ENCODE measurements at regions of chr9 and their contacts with region 1.

Region 1: GRCh38 chr9:137240861-137241489 is at the start of gene TUBB4B:
- DNase-seq: peak; percentile 87 to 99 (median 98)
- ATAC-seq: peak; percentile 87
- H3K4me3 ChIP-seq: peak within 1 kb of the TSS; percentile 72
- H3K4me3 Mint-ChIP-seq: peak within 1 kb of the TSS; percentile 83 to 97 (median 92)
- H3K27ac ChIP-seq: peak within 1 kb of the TSS; percentile 83
- H3K27ac Mint-ChIP-seq: peak within 1 kb of the TSS; percentile 82 to 94 (median 93)
- H3K4me1 ChIP-seq: peaks cover 15 to 23% of the 10 kb centered on the region in 2 donors
- H3K4me1 Mint-ChIP-seq: peaks cover 12 to 35% (median 21%) of the 10 kb centered on the region in 7 donors
- H3K27me3 ChIP-seq: no peaks in the 10 kb centered on the region
- H3K27me3 Mint-ChIP-seq: peaks cover 0 to 4% (median 0%) of the 10 kb centered on the region in 5 donors
- total RNA-seq, gene TUBB4B: 44.2 to 260 (median 87.5) TPM

Region 2: DNA sequence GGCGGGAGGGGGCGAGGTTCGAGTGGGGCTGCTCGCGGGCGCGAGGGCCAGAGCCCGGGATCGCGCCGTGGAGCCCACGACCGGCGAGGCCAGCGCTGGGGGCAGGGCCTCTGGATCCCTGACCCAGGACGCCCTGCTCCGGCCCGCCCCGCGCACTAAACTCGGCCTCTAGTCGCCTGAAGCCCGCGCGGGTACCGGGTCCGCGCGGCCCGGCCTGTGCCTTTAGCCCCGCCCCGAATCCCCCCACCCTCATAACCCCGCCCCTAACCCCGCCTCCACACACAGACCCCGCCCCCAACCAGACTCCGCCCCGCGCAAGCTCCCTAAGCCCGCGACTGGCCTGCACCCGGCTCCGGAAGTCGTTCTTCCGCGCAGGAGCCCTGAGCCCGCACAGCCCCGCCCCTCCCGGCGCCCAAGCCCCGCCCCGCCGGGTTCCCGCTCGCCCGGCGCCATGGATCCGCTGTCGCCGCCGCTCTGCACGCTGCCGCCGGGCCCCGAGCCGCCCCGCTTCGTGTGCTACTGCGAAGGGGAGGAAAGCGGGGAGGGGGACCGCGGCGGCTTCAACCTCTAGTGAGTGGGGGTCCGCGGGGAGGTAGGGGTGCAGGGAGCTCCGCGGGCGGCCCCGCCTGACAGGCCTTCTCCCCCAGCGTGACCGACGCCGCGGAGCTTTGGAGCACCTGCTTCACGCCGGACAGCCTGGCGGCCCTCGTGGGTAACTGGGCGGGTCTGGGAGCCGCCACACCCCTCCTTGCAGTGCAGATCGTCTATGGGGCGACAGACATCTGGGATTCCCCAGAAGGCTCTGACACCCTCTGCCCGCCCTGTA is 248.8 kb before region 1 on chr9 and contains the start of gene PAXX:
- CTCF ChIA-PET with region 1: no interaction called
- POLR2A ChIA-PET with region 1: interaction called, 5 read pairs
- intact Hi-C with region 1: loop called in 1 of 2 experiments (anchors 2 kb)
- DNase-seq: peak; percentile 90 to 99 (median 93)
- ATAC-seq: peak; percentile 96
- H3K4me3 ChIP-seq: peak within 1 kb of the TSS; percentile 74
- H3K4me3 Mint-ChIP-seq: peak within 1 kb of the TSS; percentile 76 to 90 (median 86)
- H3K27ac ChIP-seq: peak within 1 kb of the TSS; percentile 81
- H3K27ac Mint-ChIP-seq: peak within 1 kb of the TSS; percentile 48 to 89 (median 88)
- H3K4me1 ChIP-seq: peaks cover 17 to 23% of the 10 kb centered on the region in 2 donors
- H3K4me1 Mint-ChIP-seq: peaks cover 0 to 25% (median 15%) of the 10 kb centered on the region in 7 donors
- H3K27me3 ChIP-seq: no peaks in the 10 kb centered on the region
- H3K27me3 Mint-ChIP-seq: peaks cover 5 to 22% (median 5%) of the 10 kb centered on the region in 5 donors
- total RNA-seq, gene PAXX: 54.8 to 78.2 (median 68.0) TPM

Region 3: DNA sequence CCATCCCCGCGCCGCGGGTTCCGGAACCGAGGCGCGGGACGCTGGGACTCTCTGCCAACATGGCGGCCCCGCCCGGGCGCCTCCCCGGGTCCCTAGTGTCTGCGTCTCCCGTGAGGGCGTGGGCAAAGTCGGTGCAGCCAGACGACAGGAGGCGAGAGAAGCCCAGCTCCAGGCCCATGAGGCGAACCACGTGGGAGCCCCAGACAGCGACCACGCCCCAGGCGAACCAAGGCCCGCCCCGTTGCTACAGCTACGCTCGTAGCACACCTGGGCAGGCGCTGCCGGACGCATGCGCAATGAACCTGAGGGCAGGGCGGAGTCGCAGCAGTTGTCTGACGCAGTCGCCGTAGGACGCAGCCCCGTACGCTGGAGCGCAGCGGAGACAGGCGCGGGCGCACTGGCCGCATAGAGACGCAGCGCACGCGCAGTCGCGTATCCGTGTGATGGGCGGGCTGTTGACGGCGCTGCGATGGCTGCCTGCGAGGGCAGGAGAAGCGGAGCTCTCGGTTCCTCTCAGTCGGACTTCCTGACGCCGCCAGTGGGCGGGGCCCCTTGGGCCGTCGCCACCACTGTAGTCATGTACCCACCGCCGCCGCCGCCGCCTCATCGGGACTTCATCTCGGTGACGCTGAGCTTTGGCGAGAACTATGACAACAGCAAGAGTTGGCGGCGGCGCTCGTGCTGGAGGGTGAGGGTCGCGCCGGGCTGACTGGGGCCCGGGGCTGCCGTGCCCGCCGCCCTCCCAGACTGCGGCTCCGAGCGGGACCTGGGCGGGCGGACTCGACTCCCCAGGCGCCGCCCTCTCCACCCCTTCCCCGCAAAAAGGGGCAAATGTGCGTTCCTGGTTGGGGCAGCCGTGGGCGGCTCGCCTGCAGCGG is 154.2 kb before region 1 on chr9 and contains the start of gene MAN1B1:
- CTCF ChIA-PET with region 1: interaction called, 5 read pairs
- POLR2A ChIA-PET with region 1: interaction called, 30 read pairs
- intact Hi-C with region 1: loop called (anchors 1 kb)
- DNase-seq: peak; percentile 96 to 100 (median 99)
- ATAC-seq: peak; percentile 92
- H3K4me3 ChIP-seq: peak within 1 kb of the TSS; percentile 73
- H3K4me3 Mint-ChIP-seq: peak within 1 kb of the TSS; percentile 88 to 96 (median 92)
- H3K27ac ChIP-seq: peak within 1 kb of the TSS; percentile 92
- H3K27ac Mint-ChIP-seq: peak within 1 kb of the TSS; percentile 92 to 98 (median 95)
- H3K4me1 ChIP-seq: peaks cover 18% of the 10 kb centered on the region in 2 donors
- H3K4me1 Mint-ChIP-seq: peaks cover 25 to 34% (median 30%) of the 10 kb centered on the region in 7 donors
- H3K27me3 ChIP-seq: no peaks in the 10 kb centered on the region
- H3K27me3 Mint-ChIP-seq: no peaks in the 10 kb centered on the region
- total RNA-seq, gene MAN1B1: 57.3 to 74.2 (median 70.2) TPM

Region 4: DNA sequence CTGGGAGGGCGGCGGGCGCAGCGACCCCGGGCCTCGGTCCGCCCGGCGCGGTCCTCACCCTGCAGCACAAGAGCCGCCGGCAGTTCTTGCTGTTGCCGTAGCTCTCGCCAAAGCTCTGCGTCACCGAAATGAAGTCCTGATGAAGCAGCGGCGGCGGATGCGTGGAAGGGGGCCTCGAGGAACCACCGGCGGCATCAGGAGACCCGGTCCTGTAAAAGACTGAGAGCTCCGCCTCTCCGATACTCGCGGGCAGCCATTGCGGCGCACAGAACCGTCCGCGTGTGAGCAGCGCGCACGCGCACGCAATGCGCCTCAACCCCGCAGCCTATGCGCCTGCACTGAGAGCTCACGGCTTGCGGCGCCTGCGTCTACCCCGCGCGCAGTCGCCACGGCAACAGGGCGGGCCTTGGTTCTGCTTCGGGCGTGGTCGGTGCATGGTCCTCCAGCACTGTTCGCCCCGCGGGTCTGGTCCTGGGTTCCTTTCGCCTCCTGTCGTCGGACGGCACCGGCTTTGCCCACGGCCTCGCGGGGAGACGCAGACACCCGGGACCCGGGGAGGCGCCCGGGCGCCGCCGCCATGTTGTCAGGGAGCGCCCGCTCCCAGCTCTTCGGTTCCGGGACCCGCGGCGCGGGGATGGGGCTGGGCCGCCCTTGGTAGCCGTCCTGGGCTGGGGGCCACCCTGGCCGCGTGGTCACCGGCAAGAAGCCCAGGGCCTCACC is 111.4 kb before region 1 on chr9:
- CTCF ChIA-PET with region 1: interaction called, 6 read pairs
- POLR2A ChIA-PET with region 1: interaction called, 17 read pairs
- intact Hi-C with region 1: loop called (anchors 1 kb)
- DNase-seq: peak; percentile 74 to 93 (median 90)
- ATAC-seq: peak; percentile 98
- H3K4me3 ChIP-seq: peak overlapping the region; percentile 85
- H3K4me3 Mint-ChIP-seq: peak overlapping the region; percentile 83 to 93 (median 90)
- H3K27ac ChIP-seq: peak overlapping the region; percentile 85
- H3K27ac Mint-ChIP-seq: peak overlapping the region; percentile 67 to 88 (median 81)
- H3K4me1 ChIP-seq: peaks cover 21 to 28% of the 10 kb centered on the region in 2 donors
- H3K4me1 Mint-ChIP-seq: peaks cover 23 to 34% (median 27%) of the 10 kb centered on the region in 7 donors
- H3K27me3 ChIP-seq: no peaks in the 10 kb centered on the region
- H3K27me3 Mint-ChIP-seq: peaks cover 9 to 10% (median 9%) of the 10 kb centered on the region in 5 donors

Region 5: GRCh38 chr9:137223078-137223970 is 17.7 kb before region 1 on chr9:
- CTCF ChIA-PET with region 1: interaction called, 13 read pairs
- POLR2A ChIA-PET with region 1: interaction called, 27 read pairs
- intact Hi-C with region 1: loop called (anchors 1 kb)
- DNase-seq: peak; percentile 93 to 99 (median 99)
- ATAC-seq: peak; percentile 97
- H3K4me3 ChIP-seq: peak overlapping the region; percentile 86
- H3K4me3 Mint-ChIP-seq: peak overlapping the region; percentile 78 to 88 (median 82)
- H3K27ac ChIP-seq: peak overlapping the region; percentile 91
- H3K27ac Mint-ChIP-seq: peak overlapping the region in 7 of 9 donors; percentile 21 to 92 (median 75)
- H3K4me1 ChIP-seq: peaks cover 9 to 11% of the 10 kb centered on the region in 2 donors
- H3K4me1 Mint-ChIP-seq: peaks cover 5 to 15% (median 6%) of the 10 kb centered on the region in 7 donors
- H3K27me3 ChIP-seq: no peaks in the 10 kb centered on the region
- H3K27me3 Mint-ChIP-seq: peaks cover 0 to 6% (median 4%) of the 10 kb centered on the region in 5 donors

Region 6: DNA sequence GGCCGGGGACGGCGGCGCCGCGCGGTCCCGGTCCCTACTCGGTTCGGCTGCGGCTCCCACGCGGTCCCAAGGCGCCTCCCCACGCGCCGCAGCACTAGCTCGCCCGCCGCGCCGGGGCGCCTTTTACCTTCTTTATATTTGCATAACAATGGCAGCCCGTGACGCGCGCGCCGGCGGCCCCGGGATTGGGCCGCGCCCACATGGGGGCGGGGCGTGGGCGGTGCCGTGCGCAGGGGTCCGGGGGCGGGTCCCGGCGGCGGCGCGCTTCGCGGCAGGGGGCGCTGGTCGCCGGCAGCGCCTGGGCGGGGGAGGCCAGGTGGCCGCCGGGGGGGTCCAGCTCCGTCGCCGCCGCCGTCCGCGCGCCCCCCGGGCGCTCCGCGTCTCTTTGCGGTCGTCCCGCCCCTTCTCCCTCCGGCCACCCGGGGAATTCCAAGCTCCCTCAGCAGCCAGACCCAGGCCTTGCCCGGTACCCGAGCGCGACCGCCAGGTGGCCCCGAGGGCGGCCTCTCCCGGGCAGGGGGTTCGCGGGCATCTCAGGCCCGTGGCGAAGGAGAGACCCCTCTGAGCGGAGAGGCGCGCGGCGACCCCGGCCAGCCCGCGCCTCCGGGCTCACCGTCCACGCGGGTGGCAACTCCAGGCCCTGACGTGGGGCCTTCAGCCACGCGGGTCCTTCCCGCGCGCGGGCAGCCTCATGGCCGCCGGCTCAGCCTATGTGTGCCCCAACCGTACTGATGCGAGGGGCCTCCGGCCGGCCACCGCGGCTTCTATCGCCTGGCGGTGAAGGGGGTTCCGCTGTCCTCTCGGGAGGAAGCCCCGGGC is 61.4 kb after region 1 on chr9 and contains the start of gene NRARP:
- CTCF ChIA-PET with region 1: no interaction called
- POLR2A ChIA-PET with region 1: interaction called, 8 read pairs
- intact Hi-C with region 1: loop called in 1 of 2 experiments (anchors 2 kb)
- DNase-seq: peak; percentile 90 to 97 (median 92)
- ATAC-seq: peak; percentile 95
- H3K4me3 ChIP-seq: peak within 1 kb of the TSS; percentile 56
- H3K4me3 Mint-ChIP-seq: peak within 1 kb of the TSS; percentile 50 to 88 (median 78)
- H3K27ac ChIP-seq: peak within 1 kb of the TSS; percentile 48
- H3K27ac Mint-ChIP-seq: peak within 1 kb of the TSS in 1 of 9 donors; percentile 26
- H3K4me1 ChIP-seq: peaks cover 7 to 27% of the 10 kb centered on the region in 2 donors
- H3K4me1 Mint-ChIP-seq: peaks cover 0 to 14% (median 11%) of the 10 kb centered on the region in 7 donors
- H3K27me3 ChIP-seq: peaks cover 15 to 19% of the 10 kb centered on the region in 2 donors
- H3K27me3 Mint-ChIP-seq: peaks cover 0 to 30% (median 5%) of the 10 kb centered on the region in 5 donors
- total RNA-seq, gene NRARP: 0.70 to 2.7 (median 1.7) TPM

Region 7: GRCh38 chr9:137590462-137591383 is 349.7 kb after region 1 on chr9 and contains the start of gene ZMYND19:
- CTCF ChIA-PET with region 1: no interaction called
- POLR2A ChIA-PET with region 1: no interaction called
- intact Hi-C with region 1: loop called in 1 of 2 experiments (anchors 1 kb)
- DNase-seq: peak; percentile 84 to 97 (median 92)
- ATAC-seq: peak; percentile 99
- H3K4me3 ChIP-seq: peak within 1 kb of the TSS; percentile 64
- H3K4me3 Mint-ChIP-seq: peak within 1 kb of the TSS; percentile 88 to 96 (median 94)
- H3K27ac ChIP-seq: peak within 1 kb of the TSS; percentile 71
- H3K27ac Mint-ChIP-seq: peak within 1 kb of the TSS in 8 of 9 donors; percentile 69 to 95 (median 90)
- H3K4me1 ChIP-seq: peaks cover 0 to 12% of the 10 kb centered on the region in 2 donors
- H3K4me1 Mint-ChIP-seq: peaks cover 7 to 27% (median 16%) of the 10 kb centered on the region in 7 donors
- H3K27me3 ChIP-seq: no peaks in the 10 kb centered on the region
- H3K27me3 Mint-ChIP-seq: no peaks in the 10 kb centered on the region
- total RNA-seq, gene ZMYND19: 13.3 to 32.4 (median 26.6) TPM